B cell (primary cell): ENCODE measurements at regions of chr7 and their contacts with region 1.

Region 1: DNA sequence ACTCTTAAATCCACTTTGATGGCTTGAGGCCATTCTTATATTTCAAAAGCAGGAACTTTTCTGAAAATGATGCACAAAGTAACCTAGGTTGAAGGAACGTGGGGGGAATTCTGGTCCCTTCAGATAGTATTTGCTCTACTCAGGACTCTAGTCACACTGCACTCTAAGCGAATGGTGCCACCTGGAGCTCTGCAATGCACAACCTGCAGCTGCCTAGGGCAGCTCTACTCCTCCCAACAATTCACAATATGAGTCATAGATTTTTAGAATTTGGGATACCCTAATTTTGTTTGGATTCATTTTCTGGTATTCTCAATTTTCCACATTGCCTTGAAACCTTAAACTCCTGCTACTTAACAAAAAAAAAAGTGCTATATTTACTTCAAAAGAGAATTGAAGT is 17.3 kb downstream of the SYPL1 start:
- DNase-seq: peak; percentile 51
- ATAC-seq: peak; percentile 60
- H3K4me3 ChIP-seq: no peak overlapping the region
- H3K4me3 Mint-ChIP-seq: no peak overlapping the region
- H3K27ac ChIP-seq: peak overlapping the region in 1 of 2 donors; percentile 77
- H3K27ac Mint-ChIP-seq: peak overlapping the region; percentile 54
- H3K4me1 ChIP-seq: peaks cover 32 to 61% of the 10 kb centered on the region in 2 donors
- H3K4me1 Mint-ChIP-seq: peaks cover 67% of the 10 kb centered on the region
- H3K27me3 ChIP-seq: no peaks in the 10 kb centered on the region
- H3K27me3 Mint-ChIP-seq: no peaks in the 10 kb centered on the region
- CTCF ChIP-seq: peak; percentile 24

Region 2: DNA sequence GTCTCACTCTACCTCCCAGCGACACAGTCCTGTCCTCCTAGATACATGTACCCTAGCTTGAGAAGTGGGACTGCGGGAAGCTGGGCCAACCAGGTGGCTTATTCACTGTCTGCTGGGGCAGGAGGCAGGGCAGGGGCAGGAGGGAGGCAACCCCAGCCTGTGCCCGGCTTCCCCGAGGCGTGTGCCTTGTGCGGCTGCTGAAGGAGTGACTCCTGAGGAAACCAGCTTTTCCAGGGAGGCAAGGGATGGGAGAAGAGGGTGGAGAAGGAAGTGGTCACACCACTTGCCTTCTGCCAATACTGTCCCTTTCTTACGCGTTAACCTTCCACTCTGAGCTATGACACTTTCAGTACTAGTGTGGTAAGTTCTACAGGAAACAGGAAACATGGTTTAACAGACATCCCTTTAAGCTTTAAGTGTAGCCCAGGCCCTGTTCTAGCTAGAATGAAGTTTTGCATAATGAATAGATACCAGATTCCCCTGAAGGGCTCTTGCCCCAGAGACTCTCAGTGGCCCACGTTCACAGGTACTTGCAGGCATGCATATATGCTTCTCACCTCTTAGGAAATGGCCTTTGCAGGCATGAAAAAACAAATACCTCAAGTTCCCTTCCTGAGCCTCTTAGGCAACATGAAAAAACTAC is 23.3 kb before region 1 on chr7:
- CTCF ChIA-PET with region 1: interaction called, 66 read pairs
- POLR2A ChIA-PET with region 1: interaction called, 3 read pairs
- intact Hi-C with region 1: loop called (anchors 1 kb)
- DNase-seq: peak; percentile 90
- ATAC-seq: peak; percentile 87
- H3K4me3 ChIP-seq: peak overlapping the region in 4 of 5 experiments; percentile 33 to 66 (median 45)
- H3K4me3 Mint-ChIP-seq: peak overlapping the region; percentile 85
- H3K27ac ChIP-seq: peak overlapping the region; percentile 95 to 97
- H3K27ac Mint-ChIP-seq: peak overlapping the region; percentile 99
- H3K4me1 ChIP-seq: peaks cover 96 to 100% of the 10 kb centered on the region in 2 donors
- H3K4me1 Mint-ChIP-seq: peaks cover 94% of the 10 kb centered on the region
- H3K27me3 ChIP-seq: no peaks in the 10 kb centered on the region
- H3K27me3 Mint-ChIP-seq: no peaks in the 10 kb centered on the region
- CTCF ChIP-seq: no peak

Region 3: GRCh38 chr7:106080300-106080987 is 14.4 kb before region 1 on chr7:
- CTCF ChIA-PET with region 1: interaction called, 32 read pairs
- POLR2A ChIA-PET with region 1: interaction called, 11 read pairs
- intact Hi-C with region 1: loop called (anchors 1 kb)
- DNase-seq: no peak
- ATAC-seq: no peak
- H3K4me3 ChIP-seq: no peak overlapping the region
- H3K4me3 Mint-ChIP-seq: peak overlapping the region; percentile 38
- H3K27ac ChIP-seq: peak overlapping the region in 1 of 2 donors; percentile 7
- H3K27ac Mint-ChIP-seq: peak overlapping the region; percentile 84
- H3K4me1 ChIP-seq: peaks cover 72 to 84% of the 10 kb centered on the region in 2 donors
- H3K4me1 Mint-ChIP-seq: peaks cover 77% of the 10 kb centered on the region
- H3K27me3 ChIP-seq: no peaks in the 10 kb centered on the region
- H3K27me3 Mint-ChIP-seq: no peaks in the 10 kb centered on the region
- CTCF ChIP-seq: no peak

Region 4: DNA sequence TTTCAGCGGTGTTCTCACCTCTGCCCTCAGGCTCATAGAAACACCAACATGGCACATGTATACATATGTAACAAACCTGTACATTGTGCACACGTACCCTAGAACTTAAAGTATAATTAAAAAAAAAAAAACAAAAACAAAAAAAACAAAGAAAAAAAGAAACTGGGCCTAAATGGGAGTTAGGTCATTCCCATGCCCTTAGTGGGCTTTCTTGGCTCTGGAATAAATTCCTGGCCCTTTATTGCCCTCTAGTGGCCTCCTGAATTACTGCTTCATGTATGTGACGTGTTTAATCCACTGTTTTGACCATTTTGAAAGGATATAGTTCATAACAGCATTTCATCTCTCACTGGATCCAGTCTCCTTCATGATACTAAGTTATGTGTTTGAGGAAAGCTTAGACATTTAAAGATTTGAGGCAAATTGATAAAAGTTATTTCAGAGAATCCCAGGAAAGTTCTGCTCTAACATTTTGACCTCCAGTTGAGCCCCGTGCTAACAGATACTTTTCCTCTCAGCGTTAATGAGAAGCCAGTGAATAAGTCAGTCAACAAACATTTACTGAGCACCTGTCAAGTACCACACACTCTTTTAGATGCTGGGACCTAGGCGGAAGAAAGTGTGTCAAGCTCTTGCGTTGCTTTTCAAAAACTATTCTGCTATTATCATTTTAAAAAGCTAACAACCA is 72.0 kb after region 1 on chr7:
- CTCF ChIA-PET with region 1: interaction called, 11 read pairs
- POLR2A ChIA-PET with region 1: no interaction called
- intact Hi-C with region 1: no loop called
- DNase-seq: peak; percentile 73
- ATAC-seq: peak; percentile 47
- H3K4me3 ChIP-seq: no peak overlapping the region
- H3K4me3 Mint-ChIP-seq: no peak overlapping the region
- H3K27ac ChIP-seq: no peak overlapping the region
- H3K27ac Mint-ChIP-seq: no peak overlapping the region
- H3K4me1 ChIP-seq: no peaks in the 10 kb centered on the region
- H3K4me1 Mint-ChIP-seq: peaks cover 10% of the 10 kb centered on the region
- H3K27me3 ChIP-seq: peaks cover 0 to 8% (median 0%) of the 10 kb centered on the region in 4 experiments
- H3K27me3 Mint-ChIP-seq: no peaks in the 10 kb centered on the region
- CTCF ChIP-seq: peak; percentile 95

Region 5: GRCh38 chr7:106371629-106372028 is 276.8 kb after region 1 on chr7:
- CTCF ChIA-PET with region 1: no interaction called
- POLR2A ChIA-PET with region 1: no interaction called
- intact Hi-C with region 1: no loop called
- DNase-seq: no peak
- ATAC-seq: no peak
- H3K4me3 ChIP-seq: no peak overlapping the region
- H3K4me3 Mint-ChIP-seq: no peak overlapping the region
- H3K27ac ChIP-seq: no peak overlapping the region
- H3K27ac Mint-ChIP-seq: no peak overlapping the region
- H3K4me1 ChIP-seq: no peaks in the 10 kb centered on the region
- H3K4me1 Mint-ChIP-seq: no peaks in the 10 kb centered on the region
- H3K27me3 ChIP-seq: peaks cover 0 to 3% (median 1%) of the 10 kb centered on the region in 4 experiments
- H3K27me3 Mint-ChIP-seq: peaks cover 5% of the 10 kb centered on the region
- CTCF ChIP-seq: no peak

Region 6: DNA sequence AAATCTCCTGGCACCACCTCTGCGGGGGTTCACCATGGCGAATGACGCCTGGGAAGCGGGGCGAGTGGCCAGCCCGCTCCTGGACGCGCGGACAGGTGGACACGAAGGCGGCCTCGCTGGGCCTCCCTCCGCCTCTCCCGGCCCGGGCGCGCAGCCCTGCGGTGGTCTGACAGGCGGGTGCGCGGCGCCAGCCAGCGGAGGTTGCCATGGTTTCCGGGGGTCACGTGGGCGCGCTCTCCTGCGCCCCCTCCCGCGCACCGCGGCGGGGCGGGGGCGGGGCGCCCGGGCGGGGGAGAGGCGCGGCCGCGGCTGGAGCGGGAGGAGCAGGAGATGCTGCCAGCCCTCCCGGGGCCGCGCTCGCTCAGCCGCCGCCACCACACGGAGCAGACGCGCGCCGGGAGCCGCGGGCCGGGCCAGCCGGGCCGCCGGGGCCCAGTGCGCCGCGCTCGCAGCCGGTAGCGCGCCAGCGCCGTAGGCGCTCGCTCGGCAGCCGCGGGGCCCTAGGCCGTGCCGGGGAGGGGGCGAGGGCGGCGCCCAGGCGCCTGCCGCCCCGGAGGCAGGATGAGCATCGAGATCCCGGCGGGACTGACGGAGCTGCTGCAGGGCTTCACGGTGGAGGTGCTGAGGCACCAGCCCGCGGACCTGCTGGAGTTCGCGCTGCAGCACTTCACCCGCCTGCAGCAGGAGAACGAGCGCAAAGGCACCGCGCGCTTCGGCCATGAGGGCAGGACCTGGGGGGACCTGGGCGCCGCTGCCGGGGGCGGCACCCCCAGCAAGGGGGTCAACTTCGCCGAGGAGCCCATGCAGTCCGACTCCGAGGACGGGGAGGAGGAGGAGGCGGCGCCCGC is 949.8 kb after region 1 on chr7 and contains the start of gene PRKAR2B:
- CTCF ChIA-PET with region 1: no interaction called
- POLR2A ChIA-PET with region 1: no interaction called
- intact Hi-C with region 1: no loop called
- DNase-seq: peak; percentile 86
- ATAC-seq: peak; percentile 94
- H3K4me3 ChIP-seq: peak within 1 kb of the TSS; percentile 41 to 69 (median 53)
- H3K4me3 Mint-ChIP-seq: peak within 1 kb of the TSS; percentile 92
- H3K27ac ChIP-seq: no peak within 1 kb of the TSS
- H3K27ac Mint-ChIP-seq: peak within 1 kb of the TSS; percentile 69
- H3K4me1 ChIP-seq: peaks cover 7 to 13% of the 10 kb centered on the region in 2 donors
- H3K4me1 Mint-ChIP-seq: peaks cover 13% of the 10 kb centered on the region
- H3K27me3 ChIP-seq: peaks cover 0 to 26% (median 24%) of the 10 kb centered on the region in 4 experiments
- H3K27me3 Mint-ChIP-seq: peaks cover 37% of the 10 kb centered on the region
- CTCF ChIP-seq: no peak
- total RNA-seq, gene PRKAR2B: 0.39 and 0.81 TPM in 2 replicates